Posterior cingulate gyrus (tissue), 11 donors: ENCODE measurements at regions of chr20 and their contacts with region 1.

Region 1: GRCh38 chr20:41173161-41173721 is 35.9 kb downstream of the PLCG1 start:
- DNase-seq: peak; percentile 82 to 98 (median 92)

Region 2: GRCh38 chr20:41232973-41233926 is 60.0 kb after region 1 on chr20:
- intact Hi-C with region 1: loop called (anchors 1 kb)
- DNase-seq: no peak

Region 3: DNA sequence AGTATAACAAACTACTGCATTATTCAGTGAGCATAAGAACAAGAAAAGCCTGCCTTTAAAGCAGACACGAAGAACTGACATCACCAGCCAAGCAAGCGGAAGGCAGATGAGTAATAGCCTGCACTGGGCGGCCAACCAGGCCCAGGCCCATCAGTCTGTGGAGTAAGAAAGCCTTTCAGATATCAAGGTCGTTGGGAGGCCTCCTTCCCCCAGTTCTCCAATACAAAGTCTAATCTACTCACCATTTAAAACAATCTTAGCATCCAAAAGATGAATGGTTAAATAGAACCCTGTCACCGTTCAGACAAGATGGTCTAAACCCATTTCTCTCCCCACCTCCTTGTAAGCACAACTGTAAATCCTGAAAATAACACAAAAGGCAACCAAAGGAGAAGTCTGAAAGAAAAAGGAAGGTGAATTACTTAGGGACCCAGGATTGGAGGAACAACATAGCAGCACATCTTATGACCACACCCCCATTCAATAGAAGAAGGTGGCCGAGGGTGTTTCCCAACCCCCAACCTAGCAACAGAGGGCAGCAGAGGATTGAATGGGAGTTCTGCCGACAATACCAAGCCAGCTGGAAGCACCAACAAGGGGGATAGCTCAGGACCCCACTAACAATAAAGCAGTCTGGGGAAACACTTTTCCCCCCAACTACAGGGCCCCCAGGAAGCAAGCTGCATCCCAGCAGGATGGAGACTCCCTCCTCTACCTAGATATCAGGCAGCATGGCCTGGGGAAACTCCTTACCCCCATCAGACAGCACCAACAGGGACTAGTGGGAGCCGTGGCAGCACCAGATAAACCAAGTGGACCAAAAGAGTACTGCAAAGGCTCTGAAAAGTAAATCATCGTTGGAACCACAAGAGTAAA is 76.4 kb after region 1 on chr20:
- intact Hi-C with region 1: loop called (anchors 5 kb)
- DNase-seq: peak; percentile 54 to 94 (median 62)

Region 4: DNA sequence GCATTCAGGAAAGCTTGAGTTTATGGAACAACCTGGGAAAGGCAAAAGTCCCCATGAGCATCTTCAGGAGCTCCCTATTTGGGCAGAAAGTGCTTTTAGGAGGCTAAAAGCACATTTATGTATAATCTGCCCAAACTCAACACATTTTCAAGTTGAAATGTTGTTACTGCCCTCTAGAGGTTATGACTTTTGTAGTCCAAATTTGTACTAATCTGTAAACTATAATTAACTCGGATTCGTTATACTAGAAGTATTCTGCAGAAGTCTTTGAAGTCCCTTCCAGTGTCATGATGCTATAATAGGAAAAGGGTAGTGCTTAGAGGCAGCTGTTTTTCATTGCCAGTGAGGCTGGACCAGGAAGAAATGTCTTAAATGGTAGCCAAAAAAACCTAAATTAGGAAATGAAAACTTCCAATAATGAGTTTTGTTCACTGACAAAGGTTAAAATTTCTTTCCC is 238.2 kb after region 1 on chr20:
- intact Hi-C with region 1: loop called (anchors 5 kb)
- DNase-seq: no peak